ENCODE measurements at regions of chr7 and their contacts with region 1.

Region 1: DNA sequence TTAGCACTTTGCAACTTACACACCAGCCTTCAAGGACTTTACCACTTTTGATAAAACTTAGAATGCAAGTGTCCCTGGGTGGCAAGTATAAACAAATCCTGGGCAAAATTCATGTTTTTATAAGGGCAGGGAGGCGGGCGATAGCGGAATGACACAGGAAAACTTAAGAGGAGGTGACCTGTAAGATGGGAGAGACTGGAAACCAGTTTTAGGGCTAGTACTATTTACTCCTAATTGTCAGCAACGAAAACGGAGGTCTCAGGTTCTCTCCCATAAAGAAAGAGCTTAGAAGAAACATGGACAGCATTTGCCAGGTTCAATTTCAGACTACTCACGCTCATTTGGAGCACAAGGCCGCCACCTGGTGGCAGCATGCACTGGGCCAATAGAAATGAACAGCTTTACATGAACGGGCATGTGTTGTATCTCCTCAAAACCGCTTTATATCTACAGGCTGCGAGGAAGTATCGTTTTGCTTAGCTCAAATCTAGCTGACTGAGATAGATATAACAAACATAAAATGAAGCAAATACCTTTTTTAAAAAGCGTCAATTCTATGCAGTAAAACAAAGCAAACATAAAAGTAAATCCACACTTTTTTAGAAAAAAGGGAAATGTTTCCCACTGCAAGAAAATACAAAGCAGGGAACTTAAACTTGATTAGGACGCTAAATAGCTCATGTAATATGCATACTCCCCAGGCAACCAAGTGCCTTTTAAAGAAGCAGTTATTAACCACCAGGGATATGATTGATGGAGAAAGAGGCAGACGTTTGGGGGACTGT is 37.6 kb upstream of the SVOPL start:
- DNase-seq: peak; percentile 69 to 88 (median 71)
- ATAC-seq: peak; percentile 67 to 89 (median 85)
- H3K4me3 ChIP-seq: no peak overlapping the region
- H3K27ac ChIP-seq: no peak overlapping the region
- H3K4me1 ChIP-seq: no peaks in the 10 kb centered on the region
- H3K27me3 ChIP-seq: no peaks in the 10 kb centered on the region
- CTCF ChIP-seq: peak; percentile 75 to 95 (median 90)
- POLR2A ChIP-seq: no peak

Region 2: DNA sequence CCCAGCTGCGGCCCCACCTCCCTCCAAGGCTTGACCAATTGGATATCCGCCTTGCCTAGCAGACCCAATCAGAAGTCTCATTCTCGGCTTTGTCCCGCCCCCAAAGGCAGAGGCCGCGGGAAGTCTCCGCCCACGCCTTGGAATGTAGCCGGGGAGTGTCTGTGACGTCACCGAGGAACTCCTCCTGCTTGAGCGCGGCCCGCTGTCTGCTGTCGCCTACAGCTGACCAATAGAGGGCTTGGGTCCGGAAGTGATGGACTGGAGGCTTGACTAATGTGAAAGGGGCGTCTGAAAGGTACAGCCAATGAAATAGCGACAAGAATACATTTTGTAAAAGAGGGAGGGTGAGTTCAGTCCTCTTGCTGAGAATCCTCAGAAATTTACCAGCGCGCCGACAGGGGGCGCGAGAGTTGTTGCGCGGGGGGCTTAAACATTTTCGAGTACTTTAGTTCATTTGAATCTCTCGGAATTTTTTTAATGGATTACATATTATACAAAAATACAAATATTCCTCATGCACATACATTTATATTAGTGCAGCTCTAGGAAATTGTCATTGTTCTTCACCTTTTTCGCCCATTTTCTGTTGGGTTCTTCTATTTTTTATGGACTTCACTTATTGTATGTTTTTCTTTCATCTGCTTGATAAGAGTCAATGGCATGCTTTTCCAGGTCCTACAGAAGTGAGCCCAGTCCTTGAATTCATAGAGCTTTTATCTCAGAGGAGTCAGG is 736.5 kb before region 1 on chr7:
- intact Hi-C with region 1: loop called in 1 of 10 experiments (anchors 10 kb)
- DNase-seq: peak; percentile 99
- ATAC-seq: peak; percentile 96 to 98 (median 98)
- H3K4me3 ChIP-seq: peak overlapping the region; percentile 70 to 99 (median 81)
- H3K27ac ChIP-seq: peak overlapping the region in 11 of 12 donors; percentile 86 to 97 (median 92)
- H3K4me1 ChIP-seq: peaks cover 0 to 37% (median 31%) of the 10 kb centered on the region in 12 donors
- H3K27me3 ChIP-seq: no peaks in the 10 kb centered on the region
- CTCF ChIP-seq: peak; percentile 87 to 98 (median 93)
- POLR2A ChIP-seq: no peak

Region 3: DNA sequence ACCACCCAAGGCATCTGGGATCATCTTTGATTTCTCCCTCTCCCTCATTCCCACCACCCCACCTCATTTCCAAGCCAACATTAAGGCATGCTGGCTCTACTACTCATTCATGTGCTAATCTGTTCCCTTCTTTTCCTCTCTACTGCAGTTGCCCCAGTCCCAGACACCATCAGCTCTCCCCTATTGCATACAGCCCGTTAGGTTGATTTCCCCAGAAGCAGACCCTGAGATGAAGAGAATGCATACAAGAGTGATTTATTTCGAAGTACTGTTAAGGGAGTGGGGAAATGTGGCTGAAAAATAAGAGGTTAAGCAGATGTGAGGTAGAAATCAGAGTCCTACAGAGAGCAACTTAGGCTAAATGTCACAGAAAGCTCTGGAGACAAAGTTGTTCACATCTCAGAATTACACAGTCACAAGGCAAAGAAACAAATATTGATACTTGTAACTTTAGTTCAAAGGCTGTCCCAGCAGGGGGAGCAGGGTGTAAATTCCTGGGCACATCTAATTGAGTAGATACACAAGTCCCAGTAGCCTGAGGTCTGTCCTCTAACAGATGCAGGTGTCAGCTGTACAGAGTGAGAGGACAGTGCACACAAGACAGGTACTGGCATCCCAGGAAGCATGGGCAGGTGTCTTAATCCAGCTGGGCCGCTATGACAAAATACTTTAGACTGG is 641.5 kb before region 1 on chr7:
- intact Hi-C with region 1: loop called in 1 of 10 experiments (anchors 2 kb)
- DNase-seq: no peak
- ATAC-seq: no peak
- H3K4me3 ChIP-seq: no peak overlapping the region
- H3K27ac ChIP-seq: no peak overlapping the region
- H3K4me1 ChIP-seq: no peaks in the 10 kb centered on the region
- H3K27me3 ChIP-seq: peaks cover 0 to 3% (median 0%) of the 10 kb centered on the region in 9 donors
- CTCF ChIP-seq: peak in 4 of 12 donors; percentile 10 to 24 (median 22)
- POLR2A ChIP-seq: no peak

Region 4: DNA sequence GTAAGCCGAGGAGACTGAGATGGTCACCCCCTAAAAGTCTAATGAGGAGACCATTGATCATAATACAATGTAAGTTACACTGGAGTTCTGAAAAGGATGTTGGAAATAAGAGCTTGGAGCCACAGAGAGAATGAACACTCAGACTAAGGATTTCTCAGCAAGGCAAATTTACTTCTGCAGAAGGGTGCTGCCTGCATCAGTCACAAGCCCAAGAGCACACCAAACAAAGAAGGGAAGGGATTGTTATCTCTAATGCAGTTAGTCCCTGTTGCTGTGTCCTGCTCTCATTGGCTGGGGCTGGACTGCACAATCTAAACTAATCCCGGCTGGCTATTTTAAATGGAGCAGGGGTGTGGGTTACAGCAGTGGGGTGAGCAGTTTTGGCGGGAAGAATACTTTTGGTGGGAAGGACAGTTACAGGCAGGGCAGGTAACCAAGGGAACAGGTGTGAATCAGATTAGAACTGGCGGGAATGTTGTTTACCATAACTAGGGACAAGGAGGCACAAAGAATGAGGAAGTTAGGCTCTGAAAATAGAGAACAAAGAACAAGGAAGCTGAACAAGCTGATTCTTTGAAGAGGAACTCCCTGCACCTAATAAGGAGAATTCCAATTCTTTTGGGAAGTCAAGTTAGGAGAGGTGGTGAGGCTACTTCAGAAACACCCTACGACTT is 309.0 kb before region 1 on chr7:
- intact Hi-C with region 1: loop called in 1 of 10 experiments (anchors 10 kb)
- DNase-seq: no peak
- ATAC-seq: no peak
- H3K4me3 ChIP-seq: no peak overlapping the region
- H3K27ac ChIP-seq: no peak overlapping the region
- H3K4me1 ChIP-seq: no peaks in the 10 kb centered on the region
- H3K27me3 ChIP-seq: no peaks in the 10 kb centered on the region
- CTCF ChIP-seq: no peak
- POLR2A ChIP-seq: no peak

Region 5: DNA sequence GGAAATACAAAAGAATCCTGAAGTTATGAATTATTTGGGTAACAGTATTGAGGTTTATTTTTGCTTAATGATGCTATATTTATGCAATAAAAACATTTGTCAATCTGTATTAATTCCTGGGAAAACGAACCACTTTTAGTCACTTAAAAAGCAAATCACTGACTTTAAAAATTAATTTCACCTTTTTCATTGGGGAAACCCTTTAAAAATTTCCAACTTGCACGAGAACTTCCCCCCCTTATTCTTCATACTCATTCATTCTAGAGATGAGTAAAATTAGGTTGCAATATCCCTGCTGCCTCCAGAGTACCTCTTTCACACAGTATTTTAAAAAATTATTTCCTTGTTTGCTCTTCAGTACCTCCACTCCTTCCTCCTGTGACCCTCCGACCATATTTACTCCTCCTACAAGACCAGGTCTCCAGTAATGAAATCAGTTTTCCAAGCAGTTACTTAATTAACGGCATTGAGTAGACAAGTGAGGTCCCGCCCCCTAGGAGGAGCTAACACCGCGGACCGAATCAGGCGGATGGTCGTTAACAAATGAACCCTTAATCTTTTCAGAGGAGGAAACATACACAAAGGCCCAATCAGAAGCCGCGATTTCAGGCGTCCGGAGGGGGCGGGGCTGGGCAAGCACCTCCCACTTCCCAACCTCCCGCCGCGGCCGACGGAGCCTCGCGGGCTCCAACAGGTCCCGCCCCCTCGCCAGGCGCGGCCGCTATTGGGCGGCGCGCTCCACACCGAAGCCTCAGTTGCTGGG is 279.1 kb before region 1 on chr7:
- intact Hi-C with region 1: loop called in 2 of 10 experiments (anchors 5 kb)
- DNase-seq: no peak
- ATAC-seq: peak; percentile 97 to 98 (median 98)
- H3K4me3 ChIP-seq: peak overlapping the region in 11 of 12 donors; percentile 72 to 98 (median 88)
- H3K27ac ChIP-seq: peak overlapping the region in 7 of 12 donors; percentile 41 to 98 (median 94)
- H3K4me1 ChIP-seq: peaks cover 0 to 14% (median 7%) of the 10 kb centered on the region in 12 donors
- H3K27me3 ChIP-seq: no peaks in the 10 kb centered on the region
- CTCF ChIP-seq: peak in 6 of 12 donors; percentile 17 to 51 (median 23)
- POLR2A ChIP-seq: no peak

Region 6: DNA sequence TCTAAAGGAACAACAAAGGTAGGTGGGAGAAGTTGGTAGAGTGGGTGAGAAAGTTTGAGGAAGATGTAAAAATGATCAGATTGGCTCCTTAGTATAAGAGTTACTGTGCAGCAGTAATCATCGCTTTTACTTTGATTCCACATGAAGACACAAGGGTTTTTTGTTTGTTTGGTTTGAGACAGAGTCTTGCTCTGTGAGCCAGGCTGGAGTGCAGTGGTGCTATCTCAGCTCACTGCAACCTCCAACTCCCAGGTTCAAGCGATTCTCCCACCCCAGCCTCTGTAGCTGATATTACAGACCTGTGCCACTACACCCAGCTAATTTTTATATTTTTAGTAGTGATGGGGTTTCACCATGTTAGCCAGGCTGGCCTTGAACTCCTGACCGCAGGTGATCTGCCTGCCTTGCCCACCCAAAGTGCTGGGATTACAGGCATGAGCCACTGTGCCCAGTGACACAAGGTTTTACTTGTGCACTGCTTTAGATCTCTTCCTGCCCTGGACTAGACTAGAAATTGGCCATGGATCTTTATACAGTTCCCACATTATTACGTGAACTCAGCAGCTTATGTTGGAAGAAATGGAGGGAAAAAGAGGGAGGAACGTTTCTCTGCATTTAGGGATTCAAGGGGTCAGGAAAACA is 631.7 kb after region 1 on chr7:
- intact Hi-C with region 1: no loop called
- DNase-seq: no peak
- ATAC-seq: peak in 1 of 4 donors; percentile 27
- H3K4me3 ChIP-seq: no peak overlapping the region
- H3K27ac ChIP-seq: no peak overlapping the region
- H3K4me1 ChIP-seq: peaks cover 2 to 97% (median 65%) of the 10 kb centered on the region in 12 donors
- H3K27me3 ChIP-seq: no peaks in the 10 kb centered on the region
- CTCF ChIP-seq: no peak
- POLR2A ChIP-seq: no peak